Sciatic nerve (tissue), 2 donors: ENCODE measurements at regions of chr11 and their contacts with region 1.

Region 1: DNA sequence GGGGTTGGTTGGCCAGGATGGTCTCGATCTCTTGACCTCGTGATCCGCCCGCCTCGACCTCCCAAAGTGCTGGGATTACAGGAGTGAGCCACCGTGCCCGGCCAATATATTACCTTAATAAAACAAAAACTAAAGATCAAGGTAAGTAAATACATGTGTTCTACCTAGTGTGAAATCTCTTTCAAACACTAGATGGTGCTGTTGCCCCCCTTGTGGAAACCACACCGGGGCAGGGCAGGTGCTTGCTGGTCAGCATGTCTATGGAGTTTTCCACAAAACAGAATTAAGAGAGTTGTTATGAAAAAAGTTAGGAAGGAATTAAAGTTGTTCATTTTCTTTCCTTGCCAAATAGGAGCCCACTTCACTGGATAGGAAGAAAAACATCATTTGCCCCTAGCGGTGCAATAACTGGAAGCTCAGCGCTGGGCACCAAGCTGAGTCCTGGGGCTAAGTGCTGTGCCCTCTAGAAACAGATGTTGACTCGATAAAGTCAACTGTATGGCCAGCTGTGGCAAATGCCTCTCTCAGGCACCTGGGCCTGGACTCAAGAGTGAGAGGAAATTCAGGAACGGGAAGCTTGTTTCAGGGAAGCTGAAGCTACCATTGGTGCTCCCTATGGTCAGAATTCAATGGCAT is 6.3 kb upstream of the KCNJ5 start:
- DNase-seq: peak; percentile 68
- ATAC-seq: peak; percentile 81

Region 2: GRCh38 chr11:128956401-128957201 is 71.8 kb after region 1 on chr11:
- intact Hi-C with region 1: loop called (anchors 10 kb)
- DNase-seq: no peak
- ATAC-seq: peak; percentile 82